H1 (cell line): ENCODE measurements at regions of chr19 and their contacts with region 1.

Region 1: DNA sequence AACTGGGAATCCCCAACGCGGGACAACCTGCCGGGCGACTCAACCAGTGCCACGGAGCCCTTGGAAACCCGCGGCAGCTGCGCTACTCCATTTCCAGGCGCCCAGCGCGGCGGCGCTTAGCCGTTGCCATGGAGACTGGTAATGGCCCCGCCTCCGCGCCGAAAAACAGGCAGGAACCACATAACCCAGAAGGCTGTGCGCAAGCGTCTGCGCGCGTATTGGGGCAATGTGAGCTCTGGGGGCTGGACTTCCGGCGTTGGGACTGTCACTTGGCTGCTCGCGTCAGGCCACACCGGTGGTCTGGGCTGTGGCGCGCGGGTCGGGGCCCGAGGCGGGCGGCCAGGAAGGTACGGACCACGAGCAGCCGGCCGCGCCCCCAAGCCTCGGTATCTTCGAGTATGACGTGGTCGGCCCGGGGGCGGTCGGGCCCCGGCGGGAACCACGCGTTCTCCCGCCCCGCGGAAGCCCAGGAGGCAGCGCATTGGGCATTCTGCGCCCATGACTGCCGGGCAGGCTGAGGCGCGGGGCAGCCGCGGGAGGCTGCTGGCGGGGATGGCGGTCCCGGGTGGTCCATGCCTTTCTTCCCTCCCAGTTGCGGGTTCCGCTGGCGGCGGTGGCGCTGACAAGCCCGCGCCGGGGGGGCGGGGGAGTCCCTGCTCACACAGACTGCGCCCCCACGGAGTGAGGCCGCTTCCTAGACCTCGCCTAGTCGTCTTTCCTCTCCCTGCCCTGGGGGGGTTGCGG is at the start of gene ZNF324B:
- DNase-seq: peak; percentile 82 to 96
- H3K4me3 ChIP-seq: peak within 1 kb of the TSS; percentile 74 to 81 (median 80)
- H3K27ac ChIP-seq: no peak within 1 kb of the TSS
- H3K4me1 ChIP-seq: no peaks in the 10 kb centered on the region
- H3K27me3 ChIP-seq: peaks cover 0 to 12% (median 6%) of the 10 kb centered on the region in 4 experiments; a peak in 3 of 7 replicates
- CTCF ChIP-seq: peak in 1 of 3 experiments; percentile 16; a peak in 1 of 4 replicates
- EP300 ChIP-seq: no peak
- POLR2A ChIP-seq: no peak
- RAD21 ChIP-seq: 0 out of 4 replicates have a peak, but pooled peaks of 1 of the 2 experiments have one; percentile 0
- total RNA-seq, gene ZNF324B: 5.3 and 6.0 TPM in 2 replicates

Region 2: GRCh38 chr19:58439576-58440554 is 11.7 kb before region 1 on chr19 and contains the start of gene ZNF132:
- CTCF ChIA-PET with region 1: interaction called, 3 read pairs
- POLR2A ChIA-PET with region 1: interaction called, 13 read pairs
- DNase-seq: peak; percentile 78 to 98
- H3K4me3 ChIP-seq: peak within 1 kb of the TSS; percentile 82 to 96 (median 90)
- H3K27ac ChIP-seq: peak within 1 kb of the TSS; percentile 60; the same call in 1 of the 2 replicates
- H3K4me1 ChIP-seq: peaks cover 0 to 5% (median 3%) of the 10 kb centered on the region in 4 experiments; a peak in 4 of 7 replicates
- H3K27me3 ChIP-seq: peaks cover 0 to 8% (median 2%) of the 10 kb centered on the region in 4 experiments; a peak in 4 of 7 replicates
- CTCF ChIP-seq: no peak
- EP300 ChIP-seq: no peak
- POLR2A ChIP-seq: peak in 1 of 2 experiments; percentile 60; a peak in 2 of 3 replicates
- RAD21 ChIP-seq: no peak
- total RNA-seq, gene ZNF132: 1.5 and 1.9 TPM in 2 replicates